Right ventricle myocardium inferior (tissue), 1 donor: ENCODE measurements at regions of chr5 and their contacts with region 1.

Region 1: GRCh38 chr5:136249678-136250266 is 56.8 kb upstream of the SMIM32 start:
- DNase-seq: no peak
- ATAC-seq: no peak

Region 2: DNA sequence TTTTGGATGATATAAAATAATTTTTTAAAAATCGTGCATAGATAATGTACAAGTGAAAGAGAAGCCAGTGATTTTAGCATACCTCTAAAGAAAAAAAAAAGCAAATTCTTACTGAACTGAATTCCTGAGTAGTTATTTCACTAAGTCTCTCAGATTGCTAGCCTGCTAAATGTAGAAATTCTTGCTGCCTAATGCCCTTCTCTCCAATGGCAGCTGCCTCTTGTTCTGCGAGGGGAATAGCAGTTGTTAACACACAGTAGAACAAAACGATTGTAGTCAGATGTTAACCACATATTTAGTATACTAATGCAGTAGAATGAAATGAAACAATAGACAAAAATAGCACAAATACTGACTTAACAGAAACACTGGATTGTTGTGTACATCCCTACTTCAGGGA is 90.3 kb before region 1 on chr5:
- intact Hi-C with region 1: no loop called
- DNase-seq: no peak
- ATAC-seq: no peak

Region 3: GRCh38 chr5:136424835-136425584 is 175.2 kb after region 1 on chr5:
- intact Hi-C with region 1: loop called (anchors 5 kb)
- DNase-seq: no peak
- ATAC-seq: no peak

Region 4: GRCh38 chr5:136769900-136770684 is 520.3 kb after region 1 on chr5:
- intact Hi-C with region 1: loop called (anchors 1 kb)
- DNase-seq: no peak
- ATAC-seq: peak; percentile 77